Activated T-helper 2 cell treated with anti-CD3 and anti-CD28 coated beads, Interferon-gamma antibody, Interleukin-2, Interleukin-4, amounts not matched to agents 10 μg/mL and 5 μg/mL and 100 μg/mL, durations not matched to agents 14 hours and 24 hours and 36 hours (primary cell): ENCODE measurements at regions of chr11 and their contacts with region 1.

Region 1: GRCh38 chr11:62787005-62787759 is at the start of gene TMEM179B:
- DNase-seq: peak; percentile 95
- H3K4me3 Mint-ChIP-seq: peak within 1 kb of the TSS; percentile 90
- H3K27ac Mint-ChIP-seq: peak within 1 kb of the TSS; percentile 91
- H3K4me1 Mint-ChIP-seq: peaks cover 39% of the 10 kb centered on the region
- H3K27me3 Mint-ChIP-seq: no peaks in the 10 kb centered on the region
- total RNA-seq, gene TMEM179B: 34.6 and 35.9 TPM in 2 replicates

Region 2: DNA sequence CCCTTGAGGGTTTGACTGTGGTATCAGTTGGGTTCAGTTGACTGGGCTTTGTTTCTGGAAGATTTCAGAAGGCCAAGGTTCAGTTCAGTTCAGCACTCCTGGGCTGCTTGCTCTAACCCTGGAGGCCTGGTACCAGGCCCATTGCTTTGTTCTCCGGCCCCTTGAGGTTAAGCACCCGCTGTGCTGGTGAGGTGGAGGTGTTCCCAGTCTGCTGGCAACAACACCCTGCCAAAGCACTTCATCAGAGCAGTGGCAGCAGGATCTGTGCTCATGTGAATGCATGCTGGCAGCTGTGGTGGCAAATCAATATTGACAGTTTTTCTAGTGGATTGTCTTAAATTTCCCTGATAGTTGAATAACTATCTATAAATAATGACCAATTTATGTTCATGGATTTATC is 601.0 kb before region 1 on chr11:
- intact Hi-C with region 1: no loop called
- DNase-seq: no peak
- H3K4me3 Mint-ChIP-seq: no peak overlapping the region
- H3K27ac Mint-ChIP-seq: no peak overlapping the region
- H3K4me1 Mint-ChIP-seq: no peaks in the 10 kb centered on the region
- H3K27me3 Mint-ChIP-seq: peaks cover 25% of the 10 kb centered on the region

Region 3: GRCh38 chr11:62753736-62754603 is 33.2 kb before region 1 on chr11 and contains the start of gene ZBTB3:
- intact Hi-C with region 1: loop called (anchors 1 kb)
- DNase-seq: peak; percentile 98
- H3K4me3 Mint-ChIP-seq: peak within 1 kb of the TSS; percentile 85
- H3K27ac Mint-ChIP-seq: peak within 1 kb of the TSS; percentile 93
- H3K4me1 Mint-ChIP-seq: peaks cover 5% of the 10 kb centered on the region
- H3K27me3 Mint-ChIP-seq: no peaks in the 10 kb centered on the region
- total RNA-seq, gene ZBTB3: 7.3 and 9.3 TPM in 2 replicates

Region 4: DNA sequence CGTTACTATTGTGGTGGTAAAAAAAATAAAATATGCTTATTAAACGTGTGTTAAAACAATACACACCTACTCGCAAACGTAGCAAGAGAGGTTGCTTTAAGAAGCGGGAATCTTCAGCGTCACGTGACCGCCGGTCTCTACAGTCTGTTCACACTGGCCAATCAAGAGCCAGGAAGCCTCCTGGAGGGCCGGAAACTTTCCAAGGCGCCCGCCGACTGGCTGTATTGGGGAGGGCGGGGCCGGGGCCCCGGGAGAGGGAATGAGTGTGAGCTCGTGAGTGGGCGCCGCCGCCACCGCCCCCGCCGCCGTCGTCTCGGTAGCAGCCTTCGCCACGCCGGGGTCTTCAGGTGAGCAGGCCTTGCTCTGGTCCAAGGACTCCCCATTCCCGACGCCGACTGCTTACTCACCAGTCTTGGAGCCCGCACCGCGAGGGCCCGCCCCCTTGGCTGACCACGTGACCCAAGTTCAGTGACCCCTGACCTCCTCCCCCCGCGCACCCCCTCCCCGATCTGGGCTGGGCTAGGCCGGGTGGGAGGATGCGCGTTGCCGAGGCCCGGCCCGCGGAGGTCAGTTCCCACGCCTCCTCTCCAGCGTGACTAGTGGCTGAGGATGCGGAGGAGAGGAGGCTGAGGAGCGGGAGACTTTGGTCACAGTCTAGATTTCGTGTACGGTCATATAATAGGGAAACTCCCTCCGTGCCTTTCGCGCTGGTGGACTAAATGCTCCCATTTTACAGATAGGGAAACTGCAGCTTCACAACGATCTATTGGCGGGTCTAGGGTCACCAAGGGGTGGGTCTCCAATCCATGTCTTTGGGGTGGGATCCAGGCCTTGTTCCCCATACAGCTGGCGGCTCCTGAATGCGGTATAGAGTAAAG is 15.8 kb before region 1 on chr11 and contains the start of gene TAF6L:
- intact Hi-C with region 1: loop called (anchors 1 kb)
- DNase-seq: peak; percentile 92
- H3K4me3 Mint-ChIP-seq: peak within 1 kb of the TSS; percentile 88
- H3K27ac Mint-ChIP-seq: peak within 1 kb of the TSS; percentile 92
- H3K4me1 Mint-ChIP-seq: peaks cover 13% of the 10 kb centered on the region
- H3K27me3 Mint-ChIP-seq: no peaks in the 10 kb centered on the region
- total RNA-seq, gene TAF6L: 17.6 and 21.0 TPM in 2 replicates

Region 5: GRCh38 chr11:62805076-62805892 is 18.1 kb after region 1 on chr11 and contains the start of gene NXF1:
- intact Hi-C with region 1: loop called (anchors 1 kb)
- DNase-seq: peak; percentile 95
- H3K4me3 Mint-ChIP-seq: peak within 1 kb of the TSS; percentile 98
- H3K27ac Mint-ChIP-seq: peak within 1 kb of the TSS; percentile 94
- H3K4me1 Mint-ChIP-seq: peaks cover 30% of the 10 kb centered on the region
- H3K27me3 Mint-ChIP-seq: no peaks in the 10 kb centered on the region
- total RNA-seq, gene NXF1: 134 and 139 TPM in 2 replicates

Region 6: GRCh38 chr11:62831520-62832335 is 44.5 kb after region 1 on chr11 and contains the start of gene STX5:
- intact Hi-C with region 1: loop called (anchors 1 kb)
- DNase-seq: peak; percentile 99
- H3K4me3 Mint-ChIP-seq: peak within 1 kb of the TSS; percentile 94
- H3K27ac Mint-ChIP-seq: peak within 1 kb of the TSS; percentile 99
- H3K4me1 Mint-ChIP-seq: peaks cover 23% of the 10 kb centered on the region
- H3K27me3 Mint-ChIP-seq: no peaks in the 10 kb centered on the region
- total RNA-seq, gene STX5: 37.4 and 41.9 TPM in 2 replicates

Region 7: GRCh38 chr11:62880803-62881578 is 93.8 kb after region 1 on chr11 and contains the start of gene SLC3A2:
- intact Hi-C with region 1: loop called (anchors 1 kb)
- DNase-seq: peak; percentile 85
- H3K4me3 Mint-ChIP-seq: peak within 1 kb of the TSS; percentile 100
- H3K27ac Mint-ChIP-seq: peak within 1 kb of the TSS; percentile 100
- H3K4me1 Mint-ChIP-seq: peaks cover 55% of the 10 kb centered on the region
- H3K27me3 Mint-ChIP-seq: no peaks in the 10 kb centered on the region
- total RNA-seq, gene SLC3A2: 245 and 286 TPM in 2 replicates